Naive thymus-derived CD4-positive, alpha-beta T cell (primary cell): ENCODE measurements at regions of chr19 and their contacts with region 1.

Region 1: DNA sequence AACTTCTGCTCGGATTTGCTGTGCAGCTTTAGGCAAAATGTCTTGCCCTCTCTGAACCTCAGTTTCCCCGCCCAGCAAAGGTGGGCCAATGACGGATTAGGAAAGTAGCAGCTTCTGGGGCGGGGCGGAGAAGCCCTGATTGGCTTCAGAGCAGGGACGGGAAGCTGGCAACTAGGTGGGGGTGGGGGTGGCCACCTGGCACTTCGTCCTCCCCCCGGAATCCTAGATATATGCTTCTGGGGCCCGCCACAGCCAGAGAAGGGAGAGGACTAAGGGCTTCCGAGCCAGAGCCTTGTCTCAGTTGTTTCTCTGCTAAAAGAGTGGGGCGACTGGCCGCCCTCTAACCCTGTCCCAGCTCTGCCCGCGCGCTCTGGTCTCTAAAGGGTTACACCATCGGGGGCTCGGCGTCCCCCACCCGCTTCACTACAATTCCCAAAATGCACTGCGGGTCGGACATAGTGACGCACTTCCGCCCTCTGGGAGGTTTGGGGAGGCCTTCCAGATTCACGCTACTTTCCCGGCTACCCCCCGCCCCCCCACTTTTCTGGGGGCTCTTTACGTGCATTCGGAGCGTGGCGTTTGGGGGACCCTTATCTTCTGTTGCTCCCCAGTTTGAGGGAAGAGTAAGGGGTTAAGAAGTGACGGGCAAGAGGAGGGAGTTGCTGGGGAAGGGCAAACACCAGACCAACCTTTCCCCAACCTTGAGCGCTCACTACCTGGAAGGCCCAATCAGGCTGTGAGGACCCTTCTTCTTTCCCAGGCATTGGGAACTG is 672 bp upstream of the IRF2BP1 start:
- DNase-seq: peak; percentile 76 to 93 (median 88)
- ATAC-seq: peak; percentile 85
- H3K4me3 ChIP-seq: peak overlapping the region; percentile 99
- H3K4me3 Mint-ChIP-seq: peak overlapping the region; percentile 93 to 99 (median 97)
- H3K27ac ChIP-seq: peak overlapping the region; percentile 86
- H3K27ac Mint-ChIP-seq: peak overlapping the region; percentile 92 to 99 (median 97)
- H3K4me1 ChIP-seq: peaks cover 15 to 34% of the 10 kb centered on the region in 2 donors
- H3K4me1 Mint-ChIP-seq: peaks cover 10 to 32% (median 19%) of the 10 kb centered on the region in 7 donors
- H3K27me3 ChIP-seq: no peaks in the 10 kb centered on the region
- H3K27me3 Mint-ChIP-seq: no peaks in the 10 kb centered on the region

Region 2: GRCh38 chr19:44890366-44891015 is 996.1 kb before region 1 on chr19:
- CTCF ChIA-PET with region 1: no interaction called
- POLR2A ChIA-PET with region 1: no interaction called
- intact Hi-C with region 1: loop called in 1 of 2 experiments (anchors 5 kb)
- DNase-seq: peak; percentile 97 to 100 (median 100)
- ATAC-seq: peak; percentile 86
- H3K4me3 ChIP-seq: peak overlapping the region; percentile 69
- H3K4me3 Mint-ChIP-seq: peak overlapping the region; percentile 83 to 93 (median 89)
- H3K27ac ChIP-seq: peak overlapping the region; percentile 84
- H3K27ac Mint-ChIP-seq: peak overlapping the region; percentile 90 to 96 (median 94)
- H3K4me1 ChIP-seq: peaks cover 10 to 20% of the 10 kb centered on the region in 2 donors
- H3K4me1 Mint-ChIP-seq: peaks cover 18 to 44% (median 35%) of the 10 kb centered on the region in 7 donors
- H3K27me3 ChIP-seq: no peaks in the 10 kb centered on the region
- H3K27me3 Mint-ChIP-seq: no peaks in the 10 kb centered on the region

Region 3: DNA sequence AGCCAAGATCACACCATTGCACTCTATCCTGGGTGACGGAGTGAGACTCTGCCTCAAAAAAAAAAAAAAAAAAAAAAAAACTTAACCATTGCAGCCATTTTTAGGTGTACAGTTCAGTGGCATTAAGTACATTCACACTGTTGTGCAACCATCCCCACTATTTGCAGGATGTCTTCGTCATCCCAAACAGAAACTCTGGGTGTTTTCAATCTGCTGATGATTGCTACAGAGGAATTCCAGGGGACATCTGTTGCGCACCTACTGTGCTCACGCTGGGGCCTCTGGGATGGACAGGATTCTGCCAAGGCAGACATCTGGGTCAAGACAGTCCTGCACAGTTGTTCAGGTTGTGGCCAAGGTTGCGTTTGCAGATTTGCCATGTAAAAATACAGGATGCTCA is 946.9 kb before region 1 on chr19:
- CTCF ChIA-PET with region 1: no interaction called
- POLR2A ChIA-PET with region 1: no interaction called
- intact Hi-C with region 1: no loop called
- DNase-seq: no peak
- ATAC-seq: no peak
- H3K4me3 ChIP-seq: no peak overlapping the region
- H3K4me3 Mint-ChIP-seq: no peak overlapping the region
- H3K27ac ChIP-seq: no peak overlapping the region
- H3K27ac Mint-ChIP-seq: no peak overlapping the region
- H3K4me1 ChIP-seq: no peaks in the 10 kb centered on the region
- H3K4me1 Mint-ChIP-seq: peaks cover 0 to 2% (median 0%) of the 10 kb centered on the region in 7 donors
- H3K27me3 ChIP-seq: no peaks in the 10 kb centered on the region
- H3K27me3 Mint-ChIP-seq: no peaks in the 10 kb centered on the region

Region 4: DNA sequence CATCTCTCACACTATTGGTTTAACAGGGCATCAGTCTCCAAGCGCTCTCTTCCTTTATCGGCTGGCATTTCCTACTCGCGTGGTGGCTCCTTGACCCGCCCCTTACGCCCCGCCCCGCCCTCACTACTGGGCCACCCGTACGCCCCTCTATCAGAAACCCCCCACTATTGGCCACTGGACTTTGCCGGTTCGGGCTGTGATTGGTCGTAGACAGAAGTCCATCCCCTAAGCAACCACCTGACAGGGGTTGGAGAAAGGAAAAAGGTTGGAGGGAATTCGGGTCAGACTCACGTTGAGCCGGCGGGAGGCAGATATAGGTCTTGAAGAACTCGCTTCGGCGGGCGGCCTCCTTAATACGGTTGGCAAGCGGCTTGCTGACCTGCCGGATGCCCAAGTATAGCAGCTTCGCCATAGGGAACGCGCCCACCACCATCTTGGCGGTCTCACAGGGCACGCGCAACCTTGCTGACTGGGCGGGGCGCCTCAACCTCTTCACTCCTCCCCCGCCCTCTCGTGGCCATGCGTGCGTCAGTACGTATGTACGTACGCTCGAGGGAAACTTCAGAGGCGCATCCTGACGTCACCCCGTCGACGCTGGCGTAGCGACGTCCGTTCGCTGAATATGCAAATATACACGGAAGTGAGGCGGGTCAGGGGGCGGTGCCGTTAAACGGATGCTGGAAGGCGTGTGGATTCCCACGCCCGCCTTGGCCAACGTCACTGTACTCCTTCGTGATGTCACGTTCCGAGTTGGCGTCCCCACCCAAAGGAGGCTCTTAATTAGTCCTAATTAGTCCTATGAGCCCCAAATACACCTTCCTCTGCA is 302.1 kb before region 1 on chr19 and contains the start of gene OPA3:
- CTCF ChIA-PET with region 1: no interaction called
- POLR2A ChIA-PET with region 1: no interaction called
- intact Hi-C with region 1: loop called in 1 of 2 experiments (anchors 1 kb)
- DNase-seq: peak; percentile 88 to 100 (median 99)
- ATAC-seq: peak; percentile 92
- H3K4me3 ChIP-seq: peak within 1 kb of the TSS; percentile 85
- H3K4me3 Mint-ChIP-seq: peak within 1 kb of the TSS; percentile 90 to 99 (median 94)
- H3K27ac ChIP-seq: peak within 1 kb of the TSS; percentile 99
- H3K27ac Mint-ChIP-seq: peak within 1 kb of the TSS; percentile 97 to 100 (median 99)
- H3K4me1 ChIP-seq: peaks cover 6 to 10% of the 10 kb centered on the region in 2 donors
- H3K4me1 Mint-ChIP-seq: peaks cover 0 to 28% (median 20%) of the 10 kb centered on the region in 7 donors
- H3K27me3 ChIP-seq: no peaks in the 10 kb centered on the region
- H3K27me3 Mint-ChIP-seq: peaks cover 5 to 9% (median 7%) of the 10 kb centered on the region in 5 donors
- total RNA-seq, gene OPA3: 7.8 to 14.3 (median 9.0) TPM

Region 5: DNA sequence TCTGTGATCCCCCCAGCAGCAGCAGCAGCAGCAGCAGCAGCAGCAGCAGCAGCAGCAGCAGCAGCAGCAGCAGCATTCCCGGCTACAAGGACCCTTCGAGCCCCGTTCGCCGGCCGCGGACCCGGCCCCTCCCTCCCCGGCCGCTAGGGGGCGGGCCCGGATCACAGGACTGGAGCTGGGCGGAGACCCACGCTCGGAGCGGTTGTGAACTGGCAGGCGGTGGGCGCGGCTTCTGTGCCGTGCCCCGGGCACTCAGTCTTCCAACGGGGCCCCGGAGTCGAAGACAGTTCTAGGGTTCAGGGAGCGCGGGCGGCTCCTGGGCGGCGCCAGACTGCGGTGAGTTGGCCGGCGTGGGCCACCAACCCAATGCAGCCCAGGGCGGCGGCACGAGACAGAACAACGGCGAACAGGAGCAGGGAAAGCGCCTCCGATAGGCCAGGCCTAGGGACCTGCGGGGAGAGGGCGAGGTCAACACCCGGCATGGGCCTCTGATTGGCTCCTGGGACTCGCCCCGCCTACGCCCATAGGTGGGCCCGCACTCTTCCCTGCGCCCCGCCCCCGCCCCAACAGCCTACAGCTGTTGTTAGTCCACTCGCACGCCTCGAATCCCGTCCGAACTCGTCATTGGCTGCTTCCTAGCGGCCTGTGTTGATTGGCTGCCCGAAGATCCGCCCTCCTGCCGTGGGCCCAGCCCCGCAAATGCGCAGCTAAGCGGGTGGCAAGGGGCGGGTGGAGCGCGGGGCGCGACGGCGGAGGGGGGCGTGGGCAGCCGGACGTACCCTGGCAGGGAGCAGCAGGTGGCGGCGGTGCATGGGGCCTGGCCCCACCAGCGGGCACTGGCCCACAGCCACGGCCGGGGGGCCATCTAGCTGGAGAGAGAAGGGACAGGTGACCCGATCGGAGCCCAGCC is 116.2 kb before region 1 on chr19:
- CTCF ChIA-PET with region 1: interaction called, 3 read pairs
- POLR2A ChIA-PET with region 1: interaction called, 3 read pairs
- intact Hi-C with region 1: loop called (anchors 1 kb)
- DNase-seq: peak; percentile 84 to 97 (median 93)
- ATAC-seq: peak; percentile 85
- H3K4me3 ChIP-seq: peak overlapping the region; percentile 95
- H3K4me3 Mint-ChIP-seq: peak overlapping the region; percentile 81 to 92 (median 88)
- H3K27ac ChIP-seq: peak overlapping the region; percentile 64
- H3K27ac Mint-ChIP-seq: peak overlapping the region in 7 of 9 donors; percentile 43 to 93 (median 85)
- H3K4me1 ChIP-seq: peaks cover 9 to 13% of the 10 kb centered on the region in 2 donors
- H3K4me1 Mint-ChIP-seq: peaks cover 0 to 16% (median 8%) of the 10 kb centered on the region in 7 donors
- H3K27me3 ChIP-seq: no peaks in the 10 kb centered on the region
- H3K27me3 Mint-ChIP-seq: peaks cover 0 to 28% (median 4%) of the 10 kb centered on the region in 5 donors

Region 6: GRCh38 chr19:45824041-45824471 is 62.6 kb before region 1 on chr19:
- CTCF ChIA-PET with region 1: no interaction called
- POLR2A ChIA-PET with region 1: no interaction called
- intact Hi-C with region 1: no loop called
- DNase-seq: no peak
- ATAC-seq: no peak
- H3K4me3 ChIP-seq: no peak overlapping the region
- H3K4me3 Mint-ChIP-seq: peak overlapping the region in 2 of 10 donors; percentile 8 to 29
- H3K27ac ChIP-seq: no peak overlapping the region
- H3K27ac Mint-ChIP-seq: peak overlapping the region in 4 of 9 donors; percentile 21 to 77 (median 40)
- H3K4me1 ChIP-seq: no peaks in the 10 kb centered on the region
- H3K4me1 Mint-ChIP-seq: peaks cover 0 to 10% (median 6%) of the 10 kb centered on the region in 7 donors
- H3K27me3 ChIP-seq: no peaks in the 10 kb centered on the region
- H3K27me3 Mint-ChIP-seq: no peaks in the 10 kb centered on the region

Region 7: DNA sequence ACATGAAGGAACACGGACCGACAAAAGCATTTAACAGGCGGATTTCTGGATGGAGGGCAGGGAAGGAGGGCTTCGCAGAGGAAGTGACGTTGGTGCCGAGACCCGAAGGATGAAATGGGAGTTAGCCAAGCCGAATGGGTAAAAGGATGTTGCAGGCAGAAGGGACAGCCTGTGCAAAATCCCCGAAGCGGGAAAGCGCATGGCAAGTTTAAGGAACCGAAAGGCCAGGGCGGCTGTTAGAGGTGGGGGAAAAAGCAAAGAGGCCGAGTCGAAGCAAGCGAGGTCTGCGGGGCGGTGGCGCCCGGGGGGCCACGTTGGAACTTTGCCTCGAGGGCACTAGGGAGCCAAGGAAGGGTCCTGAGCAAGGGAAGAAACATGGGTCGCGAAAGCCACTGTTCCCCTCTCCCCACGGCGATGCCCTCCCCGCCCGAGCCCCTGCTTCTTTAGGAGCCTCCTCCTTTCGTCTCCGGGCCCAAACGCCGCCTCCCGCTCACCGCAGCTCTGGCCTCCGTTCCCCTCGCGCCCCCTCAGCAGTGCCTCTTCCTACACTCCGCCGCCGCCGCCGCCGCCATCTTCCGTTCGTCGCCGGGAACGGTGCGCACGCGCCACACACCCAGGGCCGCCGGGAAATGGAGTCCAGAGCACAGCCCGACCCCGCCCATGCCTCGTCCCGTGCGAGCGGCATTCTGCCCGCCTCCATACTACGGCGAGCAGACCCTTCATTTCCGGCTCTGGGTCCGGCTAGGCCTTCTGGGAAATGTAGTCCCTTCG is 23.9 kb before region 1 on chr19 and contains the start of gene SYMPK:
- CTCF ChIA-PET with region 1: interaction called, 8 read pairs
- POLR2A ChIA-PET with region 1: interaction called, 5 read pairs
- intact Hi-C with region 1: loop called (anchors 1 kb)
- DNase-seq: peak; percentile 93 to 99 (median 99)
- ATAC-seq: peak; percentile 99
- H3K4me3 ChIP-seq: peak within 1 kb of the TSS; percentile 95
- H3K4me3 Mint-ChIP-seq: peak within 1 kb of the TSS; percentile 90 to 100 (median 96)
- H3K27ac ChIP-seq: peak within 1 kb of the TSS; percentile 86
- H3K27ac Mint-ChIP-seq: peak within 1 kb of the TSS; percentile 84 to 99 (median 95)
- H3K4me1 ChIP-seq: peaks cover 12 to 15% of the 10 kb centered on the region in 2 donors
- H3K4me1 Mint-ChIP-seq: peaks cover 29 to 37% (median 36%) of the 10 kb centered on the region in 7 donors
- H3K27me3 ChIP-seq: peaks cover 0 to 4% of the 10 kb centered on the region in 2 donors
- H3K27me3 Mint-ChIP-seq: peaks cover 6 to 39% (median 21%) of the 10 kb centered on the region in 5 donors
- total RNA-seq, gene SYMPK: 81.3 to 110 (median 96.4) TPM

Region 8: GRCh38 chr19:45994989-45995714 is 108.5 kb after region 1 on chr19 and contains the start of gene CCDC61:
- CTCF ChIA-PET with region 1: interaction called, 7 read pairs
- POLR2A ChIA-PET with region 1: interaction called, 4 read pairs
- intact Hi-C with region 1: loop called (anchors 1 kb)
- DNase-seq: peak; percentile 82 to 100 (median 99)
- ATAC-seq: peak; percentile 97
- H3K4me3 ChIP-seq: peak within 1 kb of the TSS; percentile 73
- H3K4me3 Mint-ChIP-seq: peak within 1 kb of the TSS in 3 of 10 donors; percentile 9 to 64 (median 34)
- H3K27ac ChIP-seq: peak within 1 kb of the TSS; percentile 84
- H3K27ac Mint-ChIP-seq: peak within 1 kb of the TSS in 1 of 9 donors; percentile 72
- H3K4me1 ChIP-seq: peaks cover 5% of the 10 kb centered on the region in 2 donors
- H3K4me1 Mint-ChIP-seq: peaks cover 12 to 25% (median 18%) of the 10 kb centered on the region in 7 donors
- H3K27me3 ChIP-seq: no peaks in the 10 kb centered on the region
- H3K27me3 Mint-ChIP-seq: peaks cover 0 to 13% (median 5%) of the 10 kb centered on the region in 5 donors
- total RNA-seq, gene CCDC61: 15.5 to 35.8 (median 25.3) TPM

Region 9: GRCh38 chr19:47483800-47484690 is 1597.4 kb after region 1 on chr19 and contains the start of gene KPTN:
- CTCF ChIA-PET with region 1: no interaction called
- POLR2A ChIA-PET with region 1: no interaction called
- intact Hi-C with region 1: loop called in 1 of 2 experiments (anchors 10 kb)
- DNase-seq: peak; percentile 85 to 92 (median 88)
- ATAC-seq: peak; percentile 91
- H3K4me3 ChIP-seq: peak within 1 kb of the TSS; percentile 74
- H3K4me3 Mint-ChIP-seq: peak within 1 kb of the TSS; percentile 83 to 99 (median 96)
- H3K27ac ChIP-seq: peak within 1 kb of the TSS; percentile 96
- H3K27ac Mint-ChIP-seq: peak within 1 kb of the TSS; percentile 94 to 99 (median 97)
- H3K4me1 ChIP-seq: peaks cover 18% of the 10 kb centered on the region in 2 donors
- H3K4me1 Mint-ChIP-seq: peaks cover 22 to 39% (median 30%) of the 10 kb centered on the region in 7 donors
- H3K27me3 ChIP-seq: no peaks in the 10 kb centered on the region
- H3K27me3 Mint-ChIP-seq: peaks cover 0 to 4% (median 0%) of the 10 kb centered on the region in 5 donors
- total RNA-seq, gene KPTN: 5.1 to 9.2 (median 6.7) TPM